CD8-positive, alpha-beta T cell (primary cell): ENCODE measurements at regions of chr20 and their contacts with region 1.

Region 1: GRCh38 chr20:37007898-37008649 is 56.6 kb upstream of the SAMHD1 start:
- DNase-seq: peak in 6 of 9 experiments; percentile 20 to 82 (median 55)
- ATAC-seq: peak; percentile 99
- H3K4me3 ChIP-seq: no peak overlapping the region
- H3K4me3 Mint-ChIP-seq: peak overlapping the region; percentile 13
- H3K27ac ChIP-seq: peak overlapping the region in 1 of 2 experiments; percentile 58
- H3K27ac Mint-ChIP-seq: peak overlapping the region; percentile 84
- H3K4me1 ChIP-seq: peaks cover 12% of the 10 kb centered on the region
- H3K4me1 Mint-ChIP-seq: peaks cover 18% of the 10 kb centered on the region
- H3K27me3 ChIP-seq: no peaks in the 10 kb centered on the region
- H3K27me3 Mint-ChIP-seq: no peaks in the 10 kb centered on the region
- CTCF ChIP-seq: peak; percentile 71

Region 2: GRCh38 chr20:36700438-36700837 is 307.6 kb before region 1 on chr20:
- CTCF ChIA-PET with region 1: no interaction called
- POLR2A ChIA-PET with region 1: no interaction called
- intact Hi-C with region 1: no loop called
- DNase-seq: no peak
- ATAC-seq: no peak
- H3K4me3 ChIP-seq: no peak overlapping the region
- H3K4me3 Mint-ChIP-seq: no peak overlapping the region
- H3K27ac ChIP-seq: no peak overlapping the region
- H3K27ac Mint-ChIP-seq: no peak overlapping the region
- H3K4me1 ChIP-seq: no peaks in the 10 kb centered on the region
- H3K4me1 Mint-ChIP-seq: no peaks in the 10 kb centered on the region
- H3K27me3 ChIP-seq: no peaks in the 10 kb centered on the region
- H3K27me3 Mint-ChIP-seq: no peaks in the 10 kb centered on the region
- CTCF ChIP-seq: no peak

Region 3: DNA sequence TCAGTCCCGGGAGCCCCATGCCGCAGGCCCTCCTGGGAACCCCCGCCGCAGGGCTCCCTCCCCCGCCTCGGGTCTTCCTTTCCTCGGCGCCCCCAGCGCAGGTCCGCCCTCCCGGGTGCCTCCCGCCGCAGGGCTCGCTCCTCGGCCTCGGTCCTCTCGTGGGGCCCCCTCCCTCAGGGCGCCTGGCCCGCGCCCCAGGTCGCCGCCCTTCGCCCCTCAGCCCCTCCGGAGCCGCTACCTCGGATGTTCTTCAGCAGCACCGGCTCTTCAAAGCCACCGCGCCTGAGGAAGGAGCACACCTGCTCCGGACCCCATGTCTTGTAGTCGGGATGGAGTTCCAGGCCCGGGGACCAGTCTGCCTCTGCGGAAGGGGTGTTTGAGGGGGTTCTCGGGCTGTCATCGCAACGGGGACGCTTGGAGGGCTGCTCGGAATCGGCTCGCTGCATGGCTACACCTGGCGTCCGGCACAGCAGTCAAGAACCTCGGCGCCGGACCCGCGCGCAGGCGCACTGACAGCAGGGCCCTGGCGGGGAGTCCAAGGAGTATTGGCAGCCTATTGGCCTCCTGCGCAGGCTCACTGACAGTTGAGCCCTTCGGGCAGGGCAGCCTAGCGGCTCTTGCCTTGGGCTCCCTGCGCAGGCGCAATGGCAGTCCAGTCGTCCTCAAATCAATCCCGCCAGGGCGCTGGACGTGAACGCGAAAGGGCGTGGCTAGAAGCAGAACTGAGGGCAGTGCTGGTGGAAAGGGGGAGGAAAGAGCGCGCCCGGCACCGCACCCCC is 56.7 kb before region 1 on chr20 and contains the start of gene SAMHD1:
- CTCF ChIA-PET with region 1: interaction called, 10 read pairs
- POLR2A ChIA-PET with region 1: interaction called, 3 read pairs
- intact Hi-C with region 1: loop called in 1 of 2 experiments (anchors 2 kb)
- DNase-seq: peak; percentile 67 to 92 (median 82)
- ATAC-seq: peak; percentile 70
- H3K4me3 ChIP-seq: peak within 1 kb of the TSS; percentile 95 to 99
- H3K4me3 Mint-ChIP-seq: peak within 1 kb of the TSS; percentile 96
- H3K27ac ChIP-seq: peak within 1 kb of the TSS; percentile 80 to 88
- H3K27ac Mint-ChIP-seq: peak within 1 kb of the TSS; percentile 96
- H3K4me1 ChIP-seq: peaks cover 47% of the 10 kb centered on the region
- H3K4me1 Mint-ChIP-seq: peaks cover 50% of the 10 kb centered on the region
- H3K27me3 ChIP-seq: no peaks in the 10 kb centered on the region
- H3K27me3 Mint-ChIP-seq: no peaks in the 10 kb centered on the region
- CTCF ChIP-seq: no peak
- total RNA-seq, gene SAMHD1: 74.6 to 78.2 TPM

Region 4: DNA sequence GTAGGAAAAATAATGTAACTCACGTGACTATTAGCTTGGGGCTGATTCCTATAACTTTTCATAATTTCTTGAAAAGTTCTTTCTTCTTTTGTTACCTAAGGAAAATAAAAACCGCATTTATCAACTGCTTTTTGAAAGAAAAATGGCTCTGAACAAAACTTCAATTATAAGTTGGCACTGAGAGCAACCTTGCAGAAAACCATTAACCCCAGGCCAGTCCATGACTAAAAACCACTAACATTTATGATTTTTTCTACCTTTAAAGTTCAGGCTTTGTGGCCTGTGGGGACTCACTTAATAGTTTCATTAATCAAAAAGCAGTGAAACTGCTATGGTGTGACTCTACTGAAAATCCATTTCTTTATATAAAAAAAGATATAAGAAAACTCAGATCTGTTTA is 12.6 kb after region 1 on chr20:
- CTCF ChIA-PET with region 1: interaction called, 14 read pairs
- POLR2A ChIA-PET with region 1: interaction called, 8 read pairs
- intact Hi-C with region 1: no loop called
- DNase-seq: no peak
- ATAC-seq: no peak
- H3K4me3 ChIP-seq: no peak overlapping the region
- H3K4me3 Mint-ChIP-seq: no peak overlapping the region
- H3K27ac ChIP-seq: no peak overlapping the region
- H3K27ac Mint-ChIP-seq: no peak overlapping the region
- H3K4me1 ChIP-seq: peaks cover 8% of the 10 kb centered on the region
- H3K4me1 Mint-ChIP-seq: peaks cover 20% of the 10 kb centered on the region
- H3K27me3 ChIP-seq: no peaks in the 10 kb centered on the region
- H3K27me3 Mint-ChIP-seq: no peaks in the 10 kb centered on the region
- CTCF ChIP-seq: no peak

Region 5: DNA sequence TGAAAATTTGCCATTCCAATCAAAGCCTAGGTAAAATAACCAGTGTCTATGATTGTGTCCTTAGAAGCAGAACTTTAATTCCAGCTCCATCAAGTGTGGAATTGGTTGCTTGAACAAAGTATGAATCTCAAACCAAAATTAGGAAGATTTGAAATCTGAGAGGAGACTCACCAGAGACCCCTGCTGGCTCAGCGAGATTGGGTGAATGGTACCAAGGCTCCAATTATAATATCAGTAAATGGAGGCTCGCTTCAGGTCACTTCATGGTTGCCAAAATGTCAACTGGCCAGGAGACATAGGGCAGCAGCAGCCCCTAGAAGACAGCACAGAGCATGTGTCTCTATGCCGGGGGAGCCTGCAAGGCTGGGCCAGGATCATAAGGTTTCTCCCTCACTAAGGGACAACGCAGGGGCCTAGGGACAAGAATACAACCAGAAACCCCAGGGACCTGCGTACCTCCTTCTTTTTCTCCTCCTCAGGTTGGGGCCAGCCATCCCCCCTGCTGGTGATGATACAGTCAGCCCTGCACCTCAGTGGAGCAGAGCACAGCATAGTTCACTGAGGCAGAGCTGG is 73.7 kb after region 1 on chr20:
- CTCF ChIA-PET with region 1: interaction called, 124 read pairs
- POLR2A ChIA-PET with region 1: no interaction called
- intact Hi-C with region 1: loop called (anchors 1 kb)
- DNase-seq: peak; percentile 22 to 70 (median 53)
- ATAC-seq: peak; percentile 61
- H3K4me3 ChIP-seq: no peak overlapping the region
- H3K4me3 Mint-ChIP-seq: no peak overlapping the region
- H3K27ac ChIP-seq: no peak overlapping the region
- H3K27ac Mint-ChIP-seq: peak overlapping the region; percentile 72
- H3K4me1 ChIP-seq: peaks cover 11% of the 10 kb centered on the region
- H3K4me1 Mint-ChIP-seq: peaks cover 25% of the 10 kb centered on the region
- H3K27me3 ChIP-seq: no peaks in the 10 kb centered on the region
- H3K27me3 Mint-ChIP-seq: no peaks in the 10 kb centered on the region
- CTCF ChIP-seq: peak; percentile 62

Region 6: GRCh38 chr20:37111926-37112455 is 103.9 kb after region 1 on chr20:
- CTCF ChIA-PET with region 1: no interaction called
- POLR2A ChIA-PET with region 1: no interaction called
- intact Hi-C with region 1: no loop called
- DNase-seq: no peak
- ATAC-seq: no peak
- H3K4me3 ChIP-seq: no peak overlapping the region
- H3K4me3 Mint-ChIP-seq: no peak overlapping the region
- H3K27ac ChIP-seq: no peak overlapping the region
- H3K27ac Mint-ChIP-seq: no peak overlapping the region
- H3K4me1 ChIP-seq: no peaks in the 10 kb centered on the region
- H3K4me1 Mint-ChIP-seq: no peaks in the 10 kb centered on the region
- H3K27me3 ChIP-seq: no peaks in the 10 kb centered on the region
- H3K27me3 Mint-ChIP-seq: no peaks in the 10 kb centered on the region
- CTCF ChIP-seq: no peak

Region 7: DNA sequence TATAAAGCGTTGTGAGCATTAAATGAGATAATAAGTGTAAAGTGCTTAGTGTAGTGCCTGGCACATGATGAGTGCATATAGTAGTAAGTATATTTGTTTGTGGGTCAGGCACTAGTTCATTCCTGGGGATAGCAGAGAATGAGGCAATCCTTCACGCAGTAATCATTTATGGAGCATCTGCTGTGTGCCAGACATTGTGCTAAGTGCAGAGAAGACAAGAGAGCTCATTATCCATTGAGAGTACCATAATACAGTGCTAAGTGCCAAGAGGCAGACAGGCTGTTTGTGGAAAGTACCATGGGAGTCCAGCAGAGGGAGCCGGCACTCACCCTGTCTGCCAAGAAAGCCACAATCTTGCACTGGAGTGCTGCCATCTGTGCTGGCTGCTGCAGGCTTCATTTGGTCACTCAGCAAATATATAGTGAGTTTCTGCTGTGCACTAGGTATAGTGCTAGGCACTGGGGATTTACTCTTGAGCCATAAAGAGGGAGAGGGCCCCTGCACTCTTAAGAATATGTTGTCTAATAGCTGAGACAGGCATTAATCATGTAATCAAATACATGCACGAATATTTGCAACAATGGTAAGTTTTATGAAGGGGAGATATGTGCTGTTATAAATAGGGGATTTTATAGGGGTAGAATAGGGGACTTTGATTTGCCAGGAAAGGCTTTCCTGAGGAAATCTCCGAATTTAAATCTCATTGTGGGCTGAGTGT is 184.2 kb after region 1 on chr20:
- CTCF ChIA-PET with region 1: interaction called, 5 read pairs
- POLR2A ChIA-PET with region 1: no interaction called
- intact Hi-C with region 1: loop called (anchors 5 kb)
- DNase-seq: peak; percentile 46 to 80 (median 72)
- ATAC-seq: peak; percentile 80
- H3K4me3 ChIP-seq: no peak overlapping the region
- H3K4me3 Mint-ChIP-seq: no peak overlapping the region
- H3K27ac ChIP-seq: no peak overlapping the region
- H3K27ac Mint-ChIP-seq: no peak overlapping the region
- H3K4me1 ChIP-seq: peaks cover 48% of the 10 kb centered on the region
- H3K4me1 Mint-ChIP-seq: peaks cover 79% of the 10 kb centered on the region
- H3K27me3 ChIP-seq: no peaks in the 10 kb centered on the region
- H3K27me3 Mint-ChIP-seq: no peaks in the 10 kb centered on the region
- CTCF ChIP-seq: peak; percentile 95